Heart left ventricle (tissue), 16 donors: ENCODE measurements at regions of chr6 and their contacts with region 1.

Region 1: GRCh38 chr6:75934643-75935472 is 137.6 kb downstream of the IMPG1 start:
- DNase-seq: peak in 3 of 5 donors; percentile 24 to 34 (median 28)
- ATAC-seq: peak; percentile 56 to 79 (median 76)
- H3K4me3 ChIP-seq: peak overlapping the region in 10 of 12 donors; percentile 26 to 53 (median 43)
- H3K27ac ChIP-seq: no peak overlapping the region
- H3K4me1 ChIP-seq: peaks cover 0 to 14% (median 4%) of the 10 kb centered on the region in 12 donors
- H3K27me3 ChIP-seq: peaks cover 0 to 3% (median 0%) of the 10 kb centered on the region in 9 donors
- CTCF ChIP-seq: peak; percentile 46 to 78 (median 70)
- POLR2A ChIP-seq: no peak

Region 2: DNA sequence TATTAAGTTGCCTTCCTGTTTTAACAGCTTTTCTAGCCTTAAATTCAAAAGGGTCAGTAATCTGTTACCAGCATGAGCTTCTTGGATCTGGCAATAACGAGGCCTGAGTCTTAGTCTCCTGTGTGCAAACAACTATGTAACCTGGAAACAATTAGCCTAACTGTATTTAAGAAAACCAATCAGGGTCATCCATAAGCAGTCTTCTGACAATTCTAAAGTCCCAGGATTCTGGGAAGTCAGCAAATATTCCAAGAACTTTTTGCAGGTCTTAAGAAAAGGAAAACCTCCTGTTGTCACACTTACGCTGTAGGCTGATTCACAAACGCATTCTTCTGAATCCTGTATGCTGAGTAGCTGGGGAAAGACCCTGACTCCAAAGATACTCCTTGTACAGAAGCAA is 819.4 kb before region 1 on chr6:
- intact Hi-C with region 1: no loop called
- DNase-seq: no peak
- ATAC-seq: no peak
- H3K4me3 ChIP-seq: no peak overlapping the region
- H3K27ac ChIP-seq: peak overlapping the region in 1 of 12 donors; percentile 12
- H3K4me1 ChIP-seq: no peaks in the 10 kb centered on the region
- H3K27me3 ChIP-seq: no peaks in the 10 kb centered on the region
- CTCF ChIP-seq: no peak
- POLR2A ChIP-seq: no peak

Region 3: GRCh38 chr6:76342611-76343160 is 407.8 kb after region 1 on chr6:
- intact Hi-C with region 1: loop called in 2 of 10 experiments (anchors 10 kb)
- DNase-seq: no peak
- ATAC-seq: peak; percentile 38 to 76 (median 51)
- H3K4me3 ChIP-seq: no peak overlapping the region
- H3K27ac ChIP-seq: no peak overlapping the region
- H3K4me1 ChIP-seq: no peaks in the 10 kb centered on the region
- H3K27me3 ChIP-seq: no peaks in the 10 kb centered on the region
- CTCF ChIP-seq: no peak
- POLR2A ChIP-seq: no peak

Region 4: GRCh38 chr6:76671751-76672150 is 736.9 kb after region 1 on chr6:
- intact Hi-C with region 1: loop called in 1 of 10 experiments (anchors 10 kb)
- DNase-seq: no peak
- ATAC-seq: no peak
- H3K4me3 ChIP-seq: no peak overlapping the region
- H3K27ac ChIP-seq: no peak overlapping the region
- H3K4me1 ChIP-seq: no peaks in the 10 kb centered on the region
- H3K27me3 ChIP-seq: no peaks in the 10 kb centered on the region
- CTCF ChIP-seq: no peak
- POLR2A ChIP-seq: no peak

Region 5: DNA sequence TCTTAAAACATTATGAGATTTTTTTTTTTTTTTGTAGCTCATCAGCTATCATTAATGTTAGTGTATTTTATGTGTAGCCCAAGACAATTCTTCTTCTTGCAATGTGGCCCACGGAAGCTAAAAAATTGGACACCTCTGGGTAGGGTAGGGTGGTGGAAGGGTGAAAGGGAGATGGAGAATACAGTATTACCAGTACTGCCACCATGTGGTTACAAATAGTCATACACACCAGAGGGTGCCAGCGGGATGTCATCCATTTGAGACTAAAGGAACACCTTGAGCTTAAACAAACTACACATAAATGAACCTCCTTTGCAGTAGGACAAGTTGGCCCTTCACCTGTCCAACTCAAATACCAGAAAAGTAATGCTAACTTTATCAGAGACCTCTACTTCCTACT is 926.5 kb after region 1 on chr6:
- intact Hi-C with region 1: loop called in 2 of 10 experiments (anchors 10 kb)
- DNase-seq: no peak
- ATAC-seq: peak in 1 of 4 donors; percentile 51
- H3K4me3 ChIP-seq: no peak overlapping the region
- H3K27ac ChIP-seq: no peak overlapping the region
- H3K4me1 ChIP-seq: peaks cover 0 to 7% (median 0%) of the 10 kb centered on the region in 12 donors
- H3K27me3 ChIP-seq: no peaks in the 10 kb centered on the region
- CTCF ChIP-seq: peak in 7 of 12 donors; percentile 11 to 43 (median 29)
- POLR2A ChIP-seq: no peak

Region 6: GRCh38 chr6:77457720-77458349 is 1523.0 kb after region 1 on chr6:
- intact Hi-C with region 1: loop called in 9 of 10 experiments (anchors 5 to 10 kb)
- DNase-seq: peak in 4 of 5 donors; percentile 59 to 71 (median 64)
- ATAC-seq: peak; percentile 61 to 91 (median 88)
- H3K4me3 ChIP-seq: no peak overlapping the region
- H3K27ac ChIP-seq: peak overlapping the region in 7 of 12 donors; percentile 7 to 68 (median 40)
- H3K4me1 ChIP-seq: peaks cover 0 to 5% (median 0%) of the 10 kb centered on the region in 12 donors
- H3K27me3 ChIP-seq: peaks cover 0 to 26% (median 12%) of the 10 kb centered on the region in 9 donors
- CTCF ChIP-seq: peak; percentile 54 to 84 (median 67)
- POLR2A ChIP-seq: no peak